Cardiac septum (tissue), 1 donor: ENCODE measurements at regions of chr13 and their contacts with region 1.

Region 1: GRCh38 chr13:39777527-39778061 is 122.1 kb downstream of the COG6 start:
- DNase-seq: no peak

Region 2: DNA sequence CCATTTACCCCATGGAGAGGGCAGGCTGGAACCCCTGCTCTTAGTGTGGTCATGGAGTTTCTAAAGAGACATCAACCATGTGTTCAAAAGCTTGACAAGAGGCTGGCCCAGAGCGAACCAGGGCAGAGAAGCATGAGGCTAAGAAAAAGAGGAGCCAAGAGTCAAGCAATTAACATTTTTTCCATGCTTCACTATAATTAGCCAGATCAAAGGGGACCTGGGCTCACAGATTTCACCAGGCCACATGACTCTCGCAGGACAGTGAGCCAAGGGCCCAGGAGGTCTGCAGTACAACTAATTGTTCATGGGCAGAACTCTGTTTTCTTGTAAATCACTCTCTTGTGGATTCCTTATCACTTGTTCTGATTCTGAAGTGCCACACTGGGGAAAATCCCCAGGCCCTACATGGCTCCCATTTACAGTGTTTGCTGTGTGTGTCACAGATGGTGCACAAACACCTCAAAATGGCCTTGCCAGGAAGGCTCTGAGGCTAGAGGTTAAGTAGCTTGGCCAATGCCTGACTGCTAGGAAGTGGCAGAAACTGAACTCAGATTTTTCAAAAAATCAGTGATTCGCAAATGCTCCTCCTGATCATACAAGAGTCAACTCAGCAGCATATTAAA is 275.8 kb before region 1 on chr13:
- intact Hi-C with region 1: no loop called
- DNase-seq: peak; percentile 88

Region 3: GRCh38 chr13:39876258-39876657 is 98.7 kb after region 1 on chr13:
- intact Hi-C with region 1: loop called (anchors 10 kb)
- DNase-seq: no peak

Region 4: DNA sequence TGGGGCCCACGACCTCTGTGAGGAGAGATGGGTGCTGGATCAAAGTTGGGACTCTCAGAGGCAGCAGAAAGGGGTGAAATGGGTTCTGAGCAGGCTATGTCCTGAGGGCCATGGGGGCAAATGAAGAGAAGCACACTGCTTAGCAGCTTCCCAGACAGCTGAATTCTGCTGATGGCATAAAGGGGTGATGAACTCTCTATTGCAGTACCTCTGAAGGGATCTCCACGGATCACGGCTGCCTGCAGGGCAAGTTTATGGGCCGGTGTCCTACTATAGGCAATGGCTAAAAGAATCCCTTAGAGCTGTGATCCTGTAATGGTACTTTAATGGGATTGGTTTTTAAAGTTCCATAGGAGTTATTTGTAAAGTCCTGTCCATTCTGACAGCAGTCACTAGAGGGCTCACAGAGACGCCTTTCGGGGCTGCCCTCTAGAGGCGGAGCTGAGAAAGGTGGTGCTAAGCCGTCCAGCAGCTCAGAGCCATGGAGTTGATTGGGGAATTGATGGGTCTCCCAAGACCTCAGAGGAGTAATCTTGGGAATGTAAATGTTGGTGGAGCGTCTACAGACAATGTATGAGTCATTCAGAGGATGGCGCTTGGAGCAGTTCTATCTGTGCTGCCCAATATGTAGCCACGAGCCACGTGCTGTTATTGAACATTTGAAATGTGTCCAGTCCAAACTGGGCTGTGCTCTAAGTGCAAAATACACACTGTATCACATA is 165.1 kb after region 1 on chr13:
- intact Hi-C with region 1: loop called (anchors 5 kb)
- DNase-seq: no peak

Region 5: DNA sequence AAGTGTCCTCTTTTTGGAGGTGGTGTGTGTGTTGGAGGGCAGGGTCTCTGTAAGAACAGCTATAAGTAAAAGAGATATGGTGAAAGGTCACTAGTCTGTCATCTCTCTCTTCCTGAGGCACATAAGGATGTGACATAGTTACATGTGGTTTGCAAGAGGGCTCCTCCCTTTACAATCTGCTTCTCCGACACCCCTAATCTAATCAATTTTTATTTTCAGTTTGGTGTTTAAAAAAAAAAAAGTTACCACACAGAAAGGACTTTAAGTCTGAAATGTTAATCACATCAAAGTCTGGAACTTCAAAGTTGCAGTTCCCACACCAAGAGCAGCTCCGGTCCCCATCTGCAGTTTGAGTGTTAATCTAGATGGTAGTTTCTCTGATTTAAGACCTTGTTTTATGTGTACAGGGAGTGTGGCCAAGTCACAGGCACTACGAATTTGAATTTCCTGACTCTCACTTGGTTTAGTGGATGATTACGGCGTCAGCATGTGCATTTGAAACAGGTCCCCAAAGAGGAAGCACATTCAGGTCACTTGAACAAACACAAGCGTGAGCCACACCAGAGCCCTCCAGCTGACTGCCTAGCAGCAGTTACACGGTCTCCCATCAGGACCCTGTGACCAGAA is 835.7 kb after region 1 on chr13:
- intact Hi-C with region 1: loop called (anchors 10 kb)
- DNase-seq: no peak

Region 6: DNA sequence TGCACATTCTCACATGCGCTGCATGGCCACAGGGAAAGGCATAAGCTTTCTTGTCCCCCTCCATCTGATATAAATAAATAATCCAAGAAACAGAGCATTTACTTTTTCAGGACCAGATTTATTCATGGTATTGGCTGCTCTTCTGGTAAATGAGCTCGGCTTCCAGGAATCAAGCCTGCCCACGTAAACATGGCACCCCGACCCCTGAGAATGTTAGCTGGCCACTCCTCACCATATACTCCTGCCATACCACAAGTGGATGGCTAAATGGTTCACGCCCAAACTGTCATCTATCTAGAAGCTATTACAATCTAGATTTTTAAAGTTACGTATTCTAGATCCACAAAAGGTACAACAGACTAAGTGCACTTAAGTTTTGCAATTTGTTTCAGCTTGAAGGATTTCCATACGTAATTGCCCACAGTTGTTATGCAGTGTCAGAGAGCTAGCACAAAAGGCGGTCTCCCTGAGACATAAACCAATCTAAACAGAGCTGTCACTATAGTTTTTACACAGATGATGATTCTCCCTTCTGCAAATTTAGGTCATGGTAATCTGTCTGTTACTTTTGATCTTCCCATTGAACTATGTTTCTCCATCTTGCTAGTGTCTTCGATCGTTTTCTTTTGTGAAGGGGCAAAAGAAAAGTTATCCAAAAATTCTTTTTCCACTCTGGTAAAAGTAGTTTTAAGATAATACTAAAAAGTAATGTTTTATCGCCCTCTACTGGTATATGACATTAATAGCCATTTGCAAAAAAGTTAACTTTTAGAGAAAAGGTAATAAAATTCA is 905.1 kb after region 1 on chr13:
- intact Hi-C with region 1: loop called (anchors 10 kb)
- DNase-seq: no peak